Activated B cell treated with CpG ODN at 0.5 μM for 24 hours (primary cell): ENCODE measurements at regions of chr16 and their contacts with region 1.

Region 1: GRCh38 chr16:10812312-10813098 is 6.1 kb downstream of the TVP23A start:
- DNase-seq: no peak
- ATAC-seq: peak; percentile 70
- H3K4me3 Mint-ChIP-seq: peak overlapping the region; percentile 49
- H3K27ac Mint-ChIP-seq: peak overlapping the region; percentile 62
- H3K4me1 Mint-ChIP-seq: peaks cover 63% of the 10 kb centered on the region
- H3K27me3 Mint-ChIP-seq: no peaks in the 10 kb centered on the region
- CTCF ChIP-seq: no peak

Region 2: DNA sequence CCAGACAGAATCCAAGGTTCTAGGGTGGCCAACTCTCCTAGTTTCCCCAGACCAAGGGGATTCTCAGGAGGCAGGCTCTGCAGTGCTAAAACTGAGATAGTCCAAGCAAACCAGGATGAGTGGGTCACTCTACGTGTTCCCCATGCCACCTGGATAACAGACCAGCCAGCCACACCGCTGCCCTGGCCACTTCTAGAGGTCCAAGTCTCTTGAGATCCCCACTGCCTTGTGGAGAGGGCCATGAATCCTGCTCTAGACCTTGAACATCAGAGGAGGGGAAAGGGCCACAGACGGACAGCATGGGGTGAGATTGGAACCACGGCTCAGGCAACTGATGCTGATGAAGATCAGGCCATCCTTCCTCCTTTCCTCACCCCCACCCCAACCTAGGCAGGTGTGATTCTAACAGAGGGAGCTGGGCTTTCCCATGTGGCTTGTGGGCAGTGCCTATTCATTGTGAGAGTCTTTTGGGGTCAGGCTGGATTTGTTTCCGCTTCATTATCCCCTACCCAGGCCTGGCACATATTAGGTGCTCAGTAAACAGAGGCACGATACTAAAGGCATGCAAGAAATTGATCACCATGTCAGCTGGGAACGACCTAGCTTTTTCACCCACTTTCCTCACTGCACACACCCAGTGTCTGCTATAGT is 22.9 kb after region 1 on chr16:
- CTCF ChIA-PET with region 1: no interaction called
- POLR2A ChIA-PET with region 1: interaction called, 4 read pairs
- intact Hi-C with region 1: loop called (anchors 2 kb)
- DNase-seq: no peak
- ATAC-seq: peak; percentile 43
- H3K4me3 Mint-ChIP-seq: no peak overlapping the region
- H3K27ac Mint-ChIP-seq: peak overlapping the region; percentile 31
- H3K4me1 Mint-ChIP-seq: peaks cover 62% of the 10 kb centered on the region
- H3K27me3 Mint-ChIP-seq: no peaks in the 10 kb centered on the region
- CTCF ChIP-seq: no peak